ENCODE measurements at regions of chr5 and their contacts with region 1.

Region 1: GRCh38 chr5:140710899-140711552 is 10.8 kb downstream of the ZMAT2 start:
- DNase-seq: peak; percentile 95
- ATAC-seq: peak; percentile 93
- H3K4me3 Mint-ChIP-seq: peak overlapping the region; percentile 99
- H3K27ac Mint-ChIP-seq: peak overlapping the region; percentile 97
- H3K4me1 Mint-ChIP-seq: peaks cover 16% of the 10 kb centered on the region
- H3K27me3 Mint-ChIP-seq: peaks cover 2% of the 10 kb centered on the region
- CTCF ChIP-seq: no peak

Region 2: DNA sequence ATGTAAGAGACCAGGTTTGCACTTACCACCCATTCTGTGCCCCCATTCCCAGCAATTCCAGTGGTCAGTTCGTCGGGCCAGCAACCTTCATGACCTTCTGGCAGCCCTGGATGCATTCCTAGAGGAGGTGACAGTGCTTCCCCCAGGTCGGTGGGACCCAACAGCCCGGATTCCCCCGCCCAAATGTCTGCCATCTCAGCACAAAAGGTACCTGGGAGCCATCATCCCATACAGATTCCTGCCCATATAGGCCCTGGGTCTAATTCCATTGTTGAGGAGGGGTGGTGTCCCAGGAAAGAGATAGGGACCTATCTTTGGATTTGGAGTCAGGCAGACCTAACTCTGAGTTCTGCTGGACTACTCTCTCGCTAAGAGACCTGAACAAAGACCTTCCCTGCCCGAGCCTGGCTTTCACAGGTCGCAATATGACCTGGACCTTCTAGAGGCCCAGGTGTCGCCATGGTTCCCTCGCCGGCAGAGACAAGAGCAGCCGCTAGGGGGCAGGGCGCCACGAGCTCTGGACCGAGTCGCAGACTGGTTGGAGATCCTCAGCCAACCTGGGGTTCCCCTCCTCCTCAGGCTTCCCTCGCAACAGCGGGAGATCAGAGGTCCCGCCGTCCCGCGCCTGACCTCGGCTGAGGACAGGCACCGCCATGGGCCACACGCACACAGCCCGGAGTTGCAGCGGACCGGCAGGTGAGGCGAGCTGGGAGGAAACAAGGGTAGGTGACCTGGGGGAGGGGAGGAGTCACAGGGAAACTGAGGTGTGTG is 348.0 kb before region 1 on chr5:
- CTCF ChIA-PET with region 1: interaction called, 3 read pairs
- POLR2A ChIA-PET with region 1: no interaction called
- intact Hi-C with region 1: loop called (anchors 10 kb)
- DNase-seq: peak; percentile 91
- ATAC-seq: peak; percentile 96
- H3K4me3 Mint-ChIP-seq: peak overlapping the region; percentile 70
- H3K27ac Mint-ChIP-seq: no peak overlapping the region
- H3K4me1 Mint-ChIP-seq: peaks cover 5% of the 10 kb centered on the region
- H3K27me3 Mint-ChIP-seq: peaks cover 6% of the 10 kb centered on the region
- CTCF ChIP-seq: peak; percentile 91

Region 3: GRCh38 chr5:140372971-140373487 is 338.0 kb before region 1 on chr5:
- CTCF ChIA-PET with region 1: interaction called, 10 read pairs
- POLR2A ChIA-PET with region 1: no interaction called
- intact Hi-C with region 1: loop called (anchors 10 kb)
- DNase-seq: peak; percentile 57
- ATAC-seq: peak; percentile 86
- H3K4me3 Mint-ChIP-seq: no peak overlapping the region
- H3K27ac Mint-ChIP-seq: no peak overlapping the region
- H3K4me1 Mint-ChIP-seq: no peaks in the 10 kb centered on the region
- H3K27me3 Mint-ChIP-seq: no peaks in the 10 kb centered on the region
- CTCF ChIP-seq: peak; percentile 87

Region 4: DNA sequence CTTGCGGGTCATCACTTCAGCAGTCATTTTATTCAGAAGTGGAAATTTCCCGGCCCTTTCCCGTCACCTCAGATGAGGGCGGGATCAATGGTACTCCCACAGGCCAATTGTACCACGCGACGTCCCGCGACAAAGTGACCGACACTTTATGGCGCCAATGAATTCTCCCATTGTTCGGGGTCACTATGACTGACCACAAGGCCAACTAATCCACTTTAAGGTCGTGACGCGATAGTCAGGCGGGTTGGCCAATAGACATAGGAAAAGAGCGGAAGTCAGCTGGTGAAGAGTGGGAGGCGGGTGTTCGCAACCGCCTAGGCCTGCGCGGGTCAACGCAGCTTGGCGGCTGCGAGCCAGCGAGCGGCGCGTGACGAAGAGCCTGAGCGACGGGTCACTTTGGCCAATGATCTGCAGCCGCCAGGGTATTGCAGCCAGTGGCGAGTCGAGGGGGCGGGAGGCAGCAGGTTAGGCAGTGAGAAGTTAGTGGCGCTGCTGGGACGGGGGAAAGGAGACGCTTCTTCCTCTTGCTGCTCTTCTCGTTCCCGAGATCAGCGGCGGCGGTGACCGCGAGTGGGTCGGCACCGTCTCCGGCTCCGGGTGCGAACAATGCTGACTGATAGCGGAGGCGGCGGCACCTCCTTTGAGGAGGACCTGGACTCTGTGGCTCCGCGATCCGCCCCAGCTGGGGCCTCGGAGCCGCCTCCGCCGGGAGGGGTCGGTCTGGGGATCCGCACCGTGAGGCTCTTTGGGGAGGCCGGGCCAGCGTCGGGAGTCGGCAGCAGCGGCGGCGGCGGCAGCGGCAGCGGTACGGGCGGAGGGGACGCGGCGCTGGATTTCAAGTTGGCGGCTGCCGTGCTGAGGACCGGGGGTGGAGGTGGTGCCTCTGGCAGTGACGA is 309.4 kb before region 1 on chr5 and contains the start of gene ANKHD1:
- CTCF ChIA-PET with region 1: no interaction called
- POLR2A ChIA-PET with region 1: interaction called, 4 read pairs
- intact Hi-C with region 1: loop called (anchors 10 kb)
- DNase-seq: peak; percentile 99
- ATAC-seq: peak; percentile 83
- H3K4me3 Mint-ChIP-seq: no peak within 1 kb of the TSS
- H3K27ac Mint-ChIP-seq: no peak within 1 kb of the TSS
- H3K4me1 Mint-ChIP-seq: peaks cover 30% of the 10 kb centered on the region
- H3K27me3 Mint-ChIP-seq: no peaks in the 10 kb centered on the region
- CTCF ChIP-seq: no peak
- total RNA-seq, gene ANKHD1: 99.3 to 103 TPM

Region 5: GRCh38 chr5:140690941-140691924 is 19.8 kb before region 1 on chr5 and contains the starts of genes HARS1 and HARS2:
- CTCF ChIA-PET with region 1: interaction called, 4 read pairs
- POLR2A ChIA-PET with region 1: interaction called, 13 read pairs
- intact Hi-C with region 1: no loop called
- DNase-seq: peak; percentile 89
- ATAC-seq: peak; percentile 94
- H3K4me3 Mint-ChIP-seq: peak within 1 kb of the TSS; percentile 99
- H3K27ac Mint-ChIP-seq: peak within 1 kb of the TSS; percentile 97
- H3K4me1 Mint-ChIP-seq: peaks cover 34% of the 10 kb centered on the region
- H3K27me3 Mint-ChIP-seq: no peaks in the 10 kb centered on the region
- CTCF ChIP-seq: no peak
- total RNA-seq, gene HARS1: 84.5 to 84.9 TPM
- total RNA-seq, gene HARS2: 26.1 TPM

Region 6: GRCh38 chr5:140700177-140701144 is 10.6 kb before region 1 on chr5 and contains the start of gene ZMAT2:
- CTCF ChIA-PET with region 1: interaction called, 10 read pairs
- POLR2A ChIA-PET with region 1: interaction called, 8 read pairs
- intact Hi-C with region 1: no loop called
- DNase-seq: peak; percentile 98
- ATAC-seq: peak; percentile 100
- H3K4me3 Mint-ChIP-seq: peak within 1 kb of the TSS; percentile 92
- H3K27ac Mint-ChIP-seq: peak within 1 kb of the TSS; percentile 94
- H3K4me1 Mint-ChIP-seq: peaks cover 16% of the 10 kb centered on the region
- H3K27me3 Mint-ChIP-seq: no peaks in the 10 kb centered on the region
- CTCF ChIP-seq: no peak
- total RNA-seq, gene ZMAT2: 47.6 to 50.1 TPM

Region 7: DNA sequence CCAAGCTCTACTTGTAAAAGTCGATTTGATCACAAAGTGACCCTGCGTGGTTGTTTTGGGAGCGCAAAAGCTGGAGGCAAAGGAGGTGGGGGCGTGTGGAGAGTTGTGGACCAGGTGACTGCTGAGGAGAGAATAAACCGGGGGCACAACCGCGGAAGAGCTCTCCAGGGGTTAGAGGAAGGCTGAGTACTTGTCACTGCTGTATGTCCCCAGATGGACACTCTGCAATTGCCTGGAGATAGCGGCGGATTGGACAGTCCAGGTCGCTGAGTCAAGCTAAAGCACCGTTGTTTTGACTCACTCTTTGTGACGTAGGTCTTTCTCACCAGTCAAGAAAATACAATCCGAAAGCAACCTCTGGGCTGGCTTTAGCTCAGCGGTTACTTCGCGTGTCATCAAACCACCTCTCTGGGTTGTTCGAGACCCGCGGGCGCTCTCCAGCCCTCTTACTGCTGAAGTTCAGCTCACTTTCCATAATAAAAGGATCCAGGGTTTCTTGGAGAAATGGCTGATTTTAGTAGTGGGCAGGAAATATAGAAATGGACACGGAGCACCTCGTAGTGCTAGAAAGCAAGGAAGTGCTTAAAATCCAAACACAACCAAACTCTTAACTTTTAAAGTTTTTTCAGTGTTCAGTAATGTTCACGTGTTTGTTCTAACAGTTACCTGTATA is 14.9 kb after region 1 on chr5:
- CTCF ChIA-PET with region 1: interaction called, 10 read pairs
- POLR2A ChIA-PET with region 1: interaction called, 13 read pairs
- intact Hi-C with region 1: no loop called
- DNase-seq: peak; percentile 90
- ATAC-seq: peak; percentile 97
- H3K4me3 Mint-ChIP-seq: peak overlapping the region; percentile 83
- H3K27ac Mint-ChIP-seq: peak overlapping the region; percentile 82
- H3K4me1 Mint-ChIP-seq: peaks cover 10% of the 10 kb centered on the region
- H3K27me3 Mint-ChIP-seq: peaks cover 14% of the 10 kb centered on the region
- CTCF ChIP-seq: no peak